Sigmoid colon (tissue), 7 donors: ENCODE measurements at regions of chr1 and their contacts with region 1.

Region 1: GRCh38 chr1:70247768-70248167 is 26.6 kb downstream of the SRSF11 start:
- DNase-seq: no peak
- H3K4me3 ChIP-seq: no peak overlapping the region
- H3K27ac ChIP-seq: no peak overlapping the region
- H3K4me1 ChIP-seq: peaks cover 0 to 3% (median 0%) of the 10 kb centered on the region in 4 donors
- H3K27me3 ChIP-seq: no peaks in the 10 kb centered on the region
- CTCF ChIP-seq: no peak
- EP300 ChIP-seq: no peak
- POLR2A ChIP-seq: no peak

Region 2: GRCh38 chr1:71074681-71075080 is 826.9 kb after region 1 on chr1:
- intact Hi-C with region 1: loop called (anchors 10 kb)
- DNase-seq: no peak
- H3K4me3 ChIP-seq: no peak overlapping the region
- H3K27ac ChIP-seq: no peak overlapping the region
- H3K4me1 ChIP-seq: peaks cover 0 to 16% (median 12%) of the 10 kb centered on the region in 4 donors
- H3K27me3 ChIP-seq: no peaks in the 10 kb centered on the region
- CTCF ChIP-seq: no peak
- EP300 ChIP-seq: no peak
- POLR2A ChIP-seq: no peak